Ascending aorta (tissue), 2 donors: ENCODE measurements at regions of chr10 and their contacts with region 1.

Region 1: DNA sequence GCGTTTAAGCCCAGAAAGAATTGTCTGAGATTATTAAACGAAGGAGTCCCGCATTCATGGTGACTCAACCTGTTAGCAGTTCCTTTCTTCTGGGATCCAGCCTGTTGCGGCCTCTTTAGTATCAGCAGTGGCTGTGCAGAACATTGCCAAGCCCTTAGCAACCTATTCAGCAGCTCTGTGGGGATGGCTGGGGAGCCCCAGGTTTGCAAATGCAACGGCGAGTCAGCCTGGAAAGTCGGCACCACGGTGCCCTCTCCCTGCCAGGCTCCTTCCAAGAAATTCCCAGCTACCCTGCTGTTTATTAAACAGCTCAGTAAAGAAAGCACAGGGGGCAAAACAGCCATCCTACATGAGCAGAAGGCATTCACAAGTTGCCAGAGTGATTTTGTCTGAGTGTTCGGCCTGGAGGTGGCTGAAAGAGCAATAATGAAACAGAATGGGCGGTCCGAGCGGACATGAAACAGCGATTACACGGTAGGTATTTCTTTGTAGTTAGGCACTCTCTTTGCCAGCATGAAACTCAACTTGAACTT is 198.3 kb downstream of the BAMBI start:
- DNase-seq: no peak
- H3K4me3 ChIP-seq: no peak overlapping the region
- H3K27ac ChIP-seq: no peak overlapping the region
- H3K4me1 ChIP-seq: peaks cover 4 to 11% of the 10 kb centered on the region in 2 donors
- H3K27me3 ChIP-seq: no peaks in the 10 kb centered on the region
- CTCF ChIP-seq: no peak

Region 2: GRCh38 chr10:28796606-28797512 is 78.8 kb before region 1 on chr10:
- intact Hi-C with region 1: loop called (anchors 5 kb)
- DNase-seq: peak; percentile 21 to 87
- H3K4me3 ChIP-seq: no peak overlapping the region
- H3K27ac ChIP-seq: peak overlapping the region; percentile 51 to 68
- H3K4me1 ChIP-seq: peaks cover 0 to 8% of the 10 kb centered on the region in 2 donors
- H3K27me3 ChIP-seq: no peaks in the 10 kb centered on the region
- CTCF ChIP-seq: no peak

Region 3: DNA sequence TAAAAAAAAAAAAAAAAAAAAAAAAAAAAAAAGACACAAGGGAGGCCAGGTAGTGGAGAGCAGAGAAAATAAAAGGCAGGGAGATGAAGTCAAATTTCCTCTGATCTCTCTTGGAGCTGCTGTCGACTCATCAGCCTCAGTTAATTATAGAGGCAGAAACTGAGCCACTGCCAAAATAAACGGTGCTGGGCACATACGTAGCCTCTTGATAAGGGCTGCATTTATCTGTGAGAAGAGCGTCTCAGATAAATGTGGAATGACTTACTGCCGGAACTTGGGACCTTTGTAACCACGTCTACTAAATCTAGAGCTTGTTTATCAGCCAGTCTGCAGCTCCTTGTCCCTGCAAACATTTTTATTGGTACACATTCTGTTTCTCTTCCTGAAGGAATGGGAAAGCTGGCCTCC is 36.0 kb before region 1 on chr10:
- intact Hi-C with region 1: loop called (anchors 1 kb)
- DNase-seq: no peak
- H3K4me3 ChIP-seq: no peak overlapping the region
- H3K27ac ChIP-seq: peak overlapping the region in 1 of 2 donors; percentile 31
- H3K4me1 ChIP-seq: peaks cover 0 to 5% of the 10 kb centered on the region in 2 donors
- H3K27me3 ChIP-seq: no peaks in the 10 kb centered on the region
- CTCF ChIP-seq: no peak

Region 4: DNA sequence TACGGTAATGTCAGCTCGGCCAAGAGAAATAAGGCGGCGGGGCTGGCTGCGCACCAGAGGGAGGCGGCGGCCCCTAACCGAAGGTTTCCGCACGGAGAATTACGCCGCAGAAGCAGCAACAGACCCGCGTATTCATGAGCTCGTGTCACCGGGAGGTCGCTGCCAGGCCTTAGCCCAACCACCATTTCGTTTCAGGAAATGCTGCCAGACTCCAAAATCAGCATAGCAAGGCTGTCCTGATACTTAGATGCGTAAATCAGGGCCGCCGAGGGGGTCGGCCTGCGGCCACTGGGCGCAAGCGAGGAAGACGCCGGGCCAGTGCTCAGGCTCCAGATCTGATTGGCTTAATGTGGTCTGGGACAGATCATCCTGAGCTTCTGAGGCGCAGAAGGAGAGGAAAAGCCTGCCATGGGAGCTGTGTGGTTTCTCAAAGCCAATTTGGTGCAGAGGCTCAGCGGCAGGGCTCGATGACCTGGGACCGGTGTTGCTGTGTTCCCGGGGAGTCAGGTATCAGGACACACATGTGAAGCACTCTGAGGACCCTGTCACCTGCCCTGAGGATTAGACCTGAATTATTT is 49.6 kb after region 1 on chr10:
- intact Hi-C with region 1: loop called (anchors 1 kb)
- DNase-seq: peak in 1 of 2 donors; percentile 76
- H3K4me3 ChIP-seq: peak overlapping the region in 1 of 2 donors; percentile 47
- H3K27ac ChIP-seq: peak overlapping the region; percentile 35 to 49
- H3K4me1 ChIP-seq: peaks cover 0 to 3% of the 10 kb centered on the region in 2 donors
- H3K27me3 ChIP-seq: no peaks in the 10 kb centered on the region
- CTCF ChIP-seq: no peak

Region 5: GRCh38 chr10:28946479-28946878 is 70.9 kb after region 1 on chr10:
- intact Hi-C with region 1: no loop called
- DNase-seq: no peak
- H3K4me3 ChIP-seq: no peak overlapping the region
- H3K27ac ChIP-seq: no peak overlapping the region
- H3K4me1 ChIP-seq: no peaks in the 10 kb centered on the region
- H3K27me3 ChIP-seq: no peaks in the 10 kb centered on the region
- CTCF ChIP-seq: no peak